ENCODE measurements at regions of chr5 and their contacts with region 1.

Region 1: GRCh38 chr5:150589871-150590601 is 50.4 kb upstream of the SYNPO start:
- DNase-seq: peak; percentile 72 to 83
- ATAC-seq: peak; percentile 65 to 90 (median 83)
- H3K4me3 ChIP-seq: no peak overlapping the region
- H3K27ac ChIP-seq: peak overlapping the region in 9 of 10 donors; percentile 3 to 90 (median 74)
- H3K4me1 ChIP-seq: peaks cover 34 to 65% (median 58%) of the 10 kb centered on the region in 9 donors
- H3K27me3 ChIP-seq: no peaks in the 10 kb centered on the region
- CTCF ChIP-seq: peak; percentile 71 to 94 (median 82)

Region 2: DNA sequence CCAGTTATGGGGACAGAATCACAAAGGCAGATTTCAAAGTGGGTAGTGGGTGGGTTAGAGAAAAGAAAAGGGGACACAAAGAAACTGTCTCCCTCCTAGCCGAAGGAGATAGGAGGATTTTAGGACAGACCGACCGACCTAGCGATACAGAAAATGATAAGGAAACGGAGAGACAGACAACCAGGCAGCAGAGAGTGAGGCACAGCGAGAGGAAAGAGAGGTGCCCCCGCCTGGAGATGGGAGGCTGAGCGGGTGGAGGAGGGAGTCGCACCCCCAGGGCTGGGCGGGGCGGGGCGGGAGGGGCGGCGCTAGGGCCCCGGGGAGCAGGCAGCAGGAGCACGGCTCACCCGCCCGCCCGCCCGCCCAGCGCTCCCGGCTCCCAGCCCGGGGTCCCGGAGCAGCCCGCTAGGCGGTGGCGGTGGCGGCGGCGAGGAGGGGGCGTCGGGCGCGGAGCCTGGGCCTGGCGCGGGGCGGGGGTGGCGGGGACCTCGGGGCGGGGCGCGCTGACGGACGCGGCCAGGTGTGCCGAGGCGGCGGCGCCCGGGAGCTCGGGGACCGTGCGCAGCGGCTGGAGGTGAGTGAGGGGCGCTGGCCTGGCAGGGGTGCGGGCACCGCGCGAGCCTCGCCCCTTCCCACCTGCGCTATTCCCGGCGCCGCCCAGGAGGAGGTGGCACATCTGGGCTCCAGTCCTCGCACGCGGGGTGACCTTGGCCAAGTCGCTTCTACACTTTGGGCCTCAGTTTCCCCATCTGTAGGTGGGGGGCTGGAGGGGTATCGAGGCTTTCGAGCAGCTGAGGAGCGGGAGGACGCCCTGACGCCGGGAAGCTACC is 34.5 kb after region 1 on chr5:
- intact Hi-C with region 1: loop called in 2 of 10 experiments (anchors 5 kb)
- DNase-seq: peak in 1 of 2 donors; percentile 60
- ATAC-seq: peak; percentile 16 to 56 (median 20)
- H3K4me3 ChIP-seq: peak overlapping the region; percentile 64 to 99 (median 84)
- H3K27ac ChIP-seq: peak overlapping the region; percentile 94 to 100 (median 98)
- H3K4me1 ChIP-seq: peaks cover 20 to 88% (median 77%) of the 10 kb centered on the region in 9 donors
- H3K27me3 ChIP-seq: peaks cover 0 to 20% (median 0%) of the 10 kb centered on the region in 7 donors
- CTCF ChIP-seq: peak in 4 of 9 donors; percentile 16 to 46 (median 26)

Measured in heart right ventricle (tissue), 16 donors.